GM18951 (cell line): ENCODE measurements at regions of chr5 and their contacts with region 1.

Region 1: GRCh38 chr5:44774279-44774880 is 34.4 kb upstream of the MRPS30 start:
- POLR2A ChIP-seq: no peak

Region 2: GRCh38 chr5:44536650-44537260 is 237.6 kb before region 1 on chr5:
- in situ Hi-C with region 1: loop called (anchors 10 kb)
- POLR2A ChIP-seq: no peak

Region 3: GRCh38 chr5:44935262-44935661 is 160.9 kb after region 1 on chr5:
- in situ Hi-C with region 1: no loop called
- POLR2A ChIP-seq: no peak

Region 4: GRCh38 chr5:45542421-45542820 is 768.0 kb after region 1 on chr5:
- in situ Hi-C with region 1: no loop called
- POLR2A ChIP-seq: no peak